ENCODE measurements at regions of chr18 and their contacts with region 1.

Region 1: GRCh38 chr18:50374753-50375391 is at the start of gene SKA1:
- DNase-seq: peak; percentile 79
- ATAC-seq: peak; percentile 96
- H3K4me3 ChIP-seq: peak within 1 kb of the TSS; percentile 85
- H3K27ac ChIP-seq: no peak within 1 kb of the TSS
- H3K4me1 ChIP-seq: peaks cover 18% of the 10 kb centered on the region; the same call in 1 of the 2 replicates
- H3K27me3 ChIP-seq: no peaks in the 10 kb centered on the region
- CTCF ChIP-seq: no peak
- total RNA-seq, gene SKA1: 11.6 and 17.2 TPM in 2 replicates

Region 2: DNA sequence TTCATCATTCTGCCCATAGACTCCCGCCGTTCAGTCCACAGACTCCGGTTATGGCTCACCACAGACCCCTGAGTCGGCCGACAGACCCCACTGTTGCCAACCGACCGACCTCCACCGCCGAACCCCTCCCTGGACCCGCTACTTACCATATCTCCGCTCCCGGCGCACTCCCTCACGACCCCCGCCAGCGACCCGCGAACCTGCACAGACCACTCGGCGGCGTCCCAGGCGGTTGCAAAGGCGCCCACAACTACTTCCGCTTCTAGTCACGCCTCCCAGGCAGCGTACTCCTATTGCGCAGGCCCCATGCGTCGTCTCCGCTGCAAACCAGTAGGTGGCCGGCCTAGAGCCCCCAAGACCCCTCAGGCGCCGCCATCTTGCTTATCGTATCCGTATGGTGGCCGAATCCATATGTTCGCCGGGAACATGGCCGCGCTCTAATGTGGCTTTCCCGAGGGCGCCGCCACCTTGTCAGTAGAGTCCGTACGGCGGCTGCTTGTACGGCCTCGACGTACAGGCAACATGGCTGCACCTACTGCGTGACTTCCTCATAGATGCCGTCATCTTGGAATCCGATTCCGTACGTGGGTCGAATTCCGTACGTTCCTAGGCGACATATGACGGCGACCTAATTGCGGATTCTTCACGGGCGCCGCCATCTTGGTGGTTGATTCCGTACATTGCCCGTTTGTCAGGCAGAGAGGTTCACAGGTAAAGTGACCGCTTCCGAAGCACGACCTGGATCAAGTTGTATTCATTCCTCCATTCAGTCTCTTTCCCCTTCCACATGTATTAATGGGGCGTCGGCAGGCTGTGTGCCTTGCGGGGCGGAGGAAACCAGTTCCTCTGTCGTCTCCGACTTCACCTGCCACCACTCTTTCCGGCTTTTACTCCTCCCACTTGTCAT is 87.2 kb before region 1 on chr18 and contains the start of gene CXXC1:
- CTCF ChIA-PET with region 1: no interaction called
- POLR2A ChIA-PET with region 1: no interaction called
- intact Hi-C with region 1: loop called (anchors 5 kb)
- DNase-seq: peak; percentile 86
- ATAC-seq: peak; percentile 89
- H3K4me3 ChIP-seq: peak within 1 kb of the TSS; percentile 81
- H3K27ac ChIP-seq: no peak within 1 kb of the TSS
- H3K4me1 ChIP-seq: 0 out of 2 replicates have a peak, but pooled peaks cover 6% of the 10 kb centered on the region
- H3K27me3 ChIP-seq: no peaks in the 10 kb centered on the region
- CTCF ChIP-seq: no peak; the same call in 1 of the 2 replicates
- total RNA-seq, gene CXXC1: 25.4 and 38.2 TPM in 2 replicates

Region 3: DNA sequence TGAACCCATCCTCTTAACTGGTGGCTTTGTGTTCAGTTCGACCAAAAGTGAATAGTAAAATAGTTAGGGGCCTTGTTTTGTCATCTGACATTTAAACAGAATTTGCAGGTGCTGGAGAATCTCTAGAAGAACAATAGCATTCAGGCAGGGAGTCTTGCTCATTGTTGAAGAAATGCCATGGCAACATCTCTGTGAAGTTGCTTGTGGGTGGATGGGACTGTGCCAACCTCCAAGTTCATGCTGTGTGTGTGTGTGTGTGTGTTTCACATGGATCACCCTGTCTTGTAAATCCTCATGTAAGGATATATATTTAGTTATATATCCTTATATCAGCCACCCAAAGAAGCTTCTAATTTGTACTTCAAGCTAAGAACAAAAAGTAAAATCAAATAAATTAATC is 66.6 kb after region 1 on chr18:
- CTCF ChIA-PET with region 1: no interaction called
- POLR2A ChIA-PET with region 1: no interaction called
- intact Hi-C with region 1: no loop called
- DNase-seq: no peak
- ATAC-seq: no peak
- H3K4me3 ChIP-seq: no peak overlapping the region
- H3K27ac ChIP-seq: no peak overlapping the region
- H3K4me1 ChIP-seq: no peaks in the 10 kb centered on the region
- H3K27me3 ChIP-seq: no peaks in the 10 kb centered on the region
- CTCF ChIP-seq: no peak

Measured in PC-3 (cell line).